ENCODE measurements at regions of chr14 and their contacts with region 1.

Region 1: GRCh38 chr14:65222440-65222858 is 120.1 kb upstream of the MAX start:
- DNase-seq: peak; percentile 78
- ATAC-seq: peak; percentile 96
- H3K4me3 Mint-ChIP-seq: no peak overlapping the region
- H3K27ac Mint-ChIP-seq: peak overlapping the region; percentile 51
- H3K4me1 Mint-ChIP-seq: peaks cover 32% of the 10 kb centered on the region
- H3K27me3 Mint-ChIP-seq: no peaks in the 10 kb centered on the region

Region 2: GRCh38 chr14:65035049-65035448 is 187.4 kb before region 1 on chr14:
- CTCF ChIA-PET with region 1: no interaction called
- POLR2A ChIA-PET with region 1: no interaction called
- intact Hi-C with region 1: no loop called
- DNase-seq: no peak
- ATAC-seq: no peak
- H3K4me3 Mint-ChIP-seq: no peak overlapping the region
- H3K27ac Mint-ChIP-seq: no peak overlapping the region
- H3K4me1 Mint-ChIP-seq: no peaks in the 10 kb centered on the region
- H3K27me3 Mint-ChIP-seq: no peaks in the 10 kb centered on the region

Region 3: DNA sequence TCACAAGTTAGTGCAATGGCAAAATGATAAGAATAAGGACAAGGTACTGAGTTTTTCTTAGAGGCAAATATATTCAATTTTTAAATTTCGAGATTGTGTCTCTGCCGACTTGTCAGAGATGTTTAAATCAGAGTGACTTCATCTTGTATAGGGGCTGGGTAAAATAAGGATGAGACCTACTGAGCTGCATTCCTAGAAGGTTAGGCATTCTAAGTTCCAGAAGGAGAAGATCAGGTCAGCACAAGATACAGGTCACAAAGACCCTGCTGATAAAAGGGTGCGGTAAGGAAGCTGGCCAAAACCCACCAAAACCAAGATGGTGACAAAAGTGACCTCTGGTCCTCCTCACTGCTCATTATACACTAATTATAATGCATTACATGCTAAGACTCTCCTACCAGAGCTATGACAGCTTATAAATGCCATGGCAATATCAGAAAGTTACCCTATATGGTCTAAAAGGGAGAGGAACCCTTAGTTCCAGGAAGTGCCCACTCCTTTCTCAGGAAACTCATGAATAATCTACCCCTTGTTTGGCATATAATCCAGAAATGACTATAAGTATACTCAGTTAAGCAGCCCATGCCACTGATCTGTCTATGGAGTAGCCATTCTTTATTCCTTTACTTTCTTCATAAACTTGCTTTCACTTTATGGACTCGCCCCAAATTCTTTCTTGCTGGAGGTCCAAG is 147.0 kb after region 1 on chr14:
- CTCF ChIA-PET with region 1: no interaction called
- POLR2A ChIA-PET with region 1: no interaction called
- intact Hi-C with region 1: loop called in 1 of 2 experiments (anchors 5 kb)
- DNase-seq: peak; percentile 21
- ATAC-seq: peak; percentile 84
- H3K4me3 Mint-ChIP-seq: no peak overlapping the region
- H3K27ac Mint-ChIP-seq: peak overlapping the region; percentile 49
- H3K4me1 Mint-ChIP-seq: peaks cover 32% of the 10 kb centered on the region
- H3K27me3 Mint-ChIP-seq: no peaks in the 10 kb centered on the region

Measured in activated CD4-positive, alpha-beta T cell treated with anti-CD3 and anti-CD28 coated beads for 36 hours (primary cell).